ENCODE measurements at regions of chr1 and their contacts with region 1.

Region 1: GRCh38 chr1:148388260-148389027 is 94.7 kb downstream of the PPIAL4G start:
- DNase-seq: peak; percentile 95
- ATAC-seq: peak; percentile 86
- H3K4me3 Mint-ChIP-seq: peak overlapping the region; percentile 84
- H3K27ac Mint-ChIP-seq: peak overlapping the region; percentile 99
- H3K4me1 Mint-ChIP-seq: peaks cover 30% of the 10 kb centered on the region
- H3K27me3 Mint-ChIP-seq: no peaks in the 10 kb centered on the region
- CTCF ChIP-seq: no peak

Region 2: DNA sequence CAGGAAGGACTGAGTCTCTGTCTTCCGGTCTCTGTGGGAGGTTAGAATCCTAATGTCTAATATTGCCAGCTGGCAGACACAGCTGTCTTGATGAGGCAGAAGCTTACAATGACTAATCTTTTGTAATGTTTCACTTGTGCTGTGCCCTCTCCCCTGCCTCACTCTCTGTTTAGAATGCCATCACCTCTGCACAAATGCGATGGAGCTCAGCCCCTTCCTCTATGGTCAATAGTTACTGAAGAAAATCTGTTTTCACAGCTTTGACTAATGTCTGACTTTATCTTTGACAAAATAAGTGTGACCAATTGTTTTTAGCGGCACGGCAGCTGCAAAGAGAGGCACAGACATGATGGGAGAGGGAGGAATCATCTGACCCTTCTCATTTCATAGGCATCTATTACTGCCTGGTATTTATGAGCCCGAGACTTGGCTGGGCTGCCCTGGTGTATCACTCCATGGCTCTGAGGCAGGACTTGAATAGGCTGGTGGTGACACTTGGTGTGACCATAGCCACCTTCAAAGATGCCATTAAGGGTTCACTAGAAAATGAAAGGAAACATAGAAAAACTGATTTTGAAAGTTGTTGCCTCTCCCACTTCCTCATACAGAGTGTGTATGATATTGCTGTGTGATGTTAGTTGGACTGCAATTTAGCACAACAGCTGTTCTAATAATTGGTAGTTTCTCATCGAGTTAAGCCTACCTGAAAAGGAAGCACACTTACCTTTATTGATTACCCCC is 73.2 kb before region 1 on chr1:
- CTCF ChIA-PET with region 1: no interaction called
- POLR2A ChIA-PET with region 1: no interaction called
- intact Hi-C with region 1: no loop called
- DNase-seq: no peak
- ATAC-seq: no peak
- H3K4me3 Mint-ChIP-seq: no peak overlapping the region
- H3K27ac Mint-ChIP-seq: no peak overlapping the region
- H3K4me1 Mint-ChIP-seq: peaks cover 25% of the 10 kb centered on the region
- H3K27me3 Mint-ChIP-seq: peaks cover 41% of the 10 kb centered on the region
- CTCF ChIP-seq: no peak

Region 3: DNA sequence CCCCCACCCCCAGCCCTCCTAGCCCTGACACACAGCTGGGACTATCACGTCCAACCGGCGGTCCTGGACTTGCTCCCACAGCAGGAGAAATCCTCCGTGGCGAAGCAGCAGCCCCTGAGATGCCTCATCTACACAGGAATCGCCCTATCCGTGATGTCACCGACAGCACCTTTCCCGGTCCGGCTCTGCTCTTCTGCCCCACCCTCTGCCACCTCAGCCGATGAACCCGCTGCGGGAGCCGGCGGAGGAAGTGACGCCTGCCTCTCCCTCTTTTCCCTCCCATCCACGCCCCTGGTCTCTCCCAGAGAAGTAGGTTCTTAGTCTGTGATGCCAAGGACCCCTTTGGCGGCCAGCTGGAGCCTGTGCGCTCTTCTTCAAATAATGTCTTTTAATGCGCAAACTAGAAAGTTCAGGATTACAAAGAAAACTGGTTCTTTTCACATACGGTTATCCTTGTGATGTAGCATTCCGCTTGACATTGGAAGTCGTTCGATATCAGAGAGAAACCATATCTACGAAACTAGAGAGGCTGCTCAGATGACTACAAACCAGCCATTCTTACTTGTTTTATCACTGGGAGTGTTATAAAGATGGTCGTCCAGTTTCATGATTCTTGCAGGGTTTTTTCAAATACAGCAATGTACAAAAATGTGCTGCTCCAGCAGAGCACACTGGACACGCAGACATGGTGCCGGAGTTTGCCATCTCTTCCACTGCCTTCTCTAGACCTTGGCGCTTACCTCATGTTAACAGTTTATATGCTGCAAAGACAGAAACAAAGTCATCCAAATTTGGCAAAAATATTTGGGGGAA is 25.6 kb before region 1 on chr1:
- CTCF ChIA-PET with region 1: interaction called, 6 read pairs
- POLR2A ChIA-PET with region 1: interaction called, 15 read pairs
- intact Hi-C with region 1: no loop called
- DNase-seq: peak; percentile 65
- ATAC-seq: peak; percentile 60
- H3K4me3 Mint-ChIP-seq: peak overlapping the region; percentile 67
- H3K27ac Mint-ChIP-seq: peak overlapping the region; percentile 59
- H3K4me1 Mint-ChIP-seq: peaks cover 49% of the 10 kb centered on the region
- H3K27me3 Mint-ChIP-seq: peaks cover 7% of the 10 kb centered on the region
- CTCF ChIP-seq: no peak

Region 4: DNA sequence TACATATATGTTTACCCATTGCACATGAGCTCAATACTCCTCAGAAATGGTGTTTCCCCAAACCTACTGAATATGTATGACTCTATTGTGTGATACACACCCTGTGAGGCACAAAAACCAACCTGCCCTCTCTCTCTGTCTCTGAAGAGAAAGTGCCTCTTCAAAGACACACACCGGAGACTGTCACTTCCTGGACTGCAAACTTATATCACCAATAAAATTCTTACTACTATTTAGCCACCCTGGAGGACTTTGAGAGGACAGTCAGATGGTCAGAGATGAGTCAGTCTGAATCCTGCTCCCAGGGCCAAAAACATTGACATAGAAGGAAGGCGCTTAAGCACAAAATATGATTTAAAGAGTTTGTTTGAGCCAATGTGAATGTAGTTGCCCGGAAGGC is 15.7 kb before region 1 on chr1:
- CTCF ChIA-PET with region 1: interaction called, 9 read pairs
- POLR2A ChIA-PET with region 1: interaction called, 82 read pairs
- intact Hi-C with region 1: no loop called
- DNase-seq: peak; percentile 74
- ATAC-seq: peak; percentile 74
- H3K4me3 Mint-ChIP-seq: peak overlapping the region; percentile 37
- H3K27ac Mint-ChIP-seq: peak overlapping the region; percentile 92
- H3K4me1 Mint-ChIP-seq: peaks cover 44% of the 10 kb centered on the region
- H3K27me3 Mint-ChIP-seq: no peaks in the 10 kb centered on the region
- CTCF ChIP-seq: no peak

Region 5: DNA sequence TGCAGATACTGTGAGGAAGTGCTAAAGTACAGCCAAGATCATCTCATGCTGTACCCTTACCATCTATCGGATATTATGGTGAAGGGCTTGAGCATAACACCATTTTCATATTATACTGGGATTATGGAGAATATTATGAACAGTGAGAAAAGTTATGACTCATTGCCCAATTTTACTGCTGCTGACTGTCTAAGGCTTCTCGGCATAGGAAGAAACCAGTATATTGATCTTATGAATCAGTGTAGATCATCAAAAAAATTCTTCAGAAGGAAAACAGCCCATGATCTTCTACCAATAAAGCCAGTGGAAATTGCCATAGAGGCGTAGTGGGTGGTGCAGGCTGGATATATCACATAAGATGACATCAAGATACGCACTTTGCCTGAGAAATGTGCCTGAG is 47.0 kb after region 1 on chr1:
- CTCF ChIA-PET with region 1: no interaction called
- POLR2A ChIA-PET with region 1: no interaction called
- intact Hi-C with region 1: no loop called
- DNase-seq: no peak
- ATAC-seq: no peak
- H3K4me3 Mint-ChIP-seq: no peak overlapping the region
- H3K27ac Mint-ChIP-seq: peak overlapping the region; percentile 3
- H3K4me1 Mint-ChIP-seq: peaks cover 79% of the 10 kb centered on the region
- H3K27me3 Mint-ChIP-seq: no peaks in the 10 kb centered on the region
- CTCF ChIP-seq: no peak

Measured in activated CD8-positive, alpha-beta T cell treated with anti-CD3 and anti-CD28 coated beads for 36 hours (primary cell).